B cell (primary cell): ENCODE measurements at regions of chr18 and their contacts with region 1.

Region 1: GRCh38 chr18:2547477-2548087 is 23.7 kb downstream of the METTL4 start:
- DNase-seq: peak; percentile 61
- ATAC-seq: peak; percentile 33
- H3K4me3 ChIP-seq: no peak overlapping the region
- H3K4me3 Mint-ChIP-seq: no peak overlapping the region
- H3K27ac ChIP-seq: no peak overlapping the region
- H3K27ac Mint-ChIP-seq: peak overlapping the region; percentile 18
- H3K4me1 ChIP-seq: peaks cover 0 to 2% of the 10 kb centered on the region in 2 donors
- H3K4me1 Mint-ChIP-seq: peaks cover 10% of the 10 kb centered on the region
- H3K27me3 ChIP-seq: no peaks in the 10 kb centered on the region
- H3K27me3 Mint-ChIP-seq: no peaks in the 10 kb centered on the region
- CTCF ChIP-seq: peak; percentile 81

Region 2: GRCh38 chr18:623761-624620 is 1923.6 kb before region 1 on chr18:
- CTCF ChIA-PET with region 1: no interaction called
- POLR2A ChIA-PET with region 1: no interaction called
- intact Hi-C with region 1: loop called (anchors 10 kb)
- DNase-seq: peak; percentile 52
- ATAC-seq: peak; percentile 49
- H3K4me3 ChIP-seq: no peak overlapping the region
- H3K4me3 Mint-ChIP-seq: no peak overlapping the region
- H3K27ac ChIP-seq: no peak overlapping the region
- H3K27ac Mint-ChIP-seq: no peak overlapping the region
- H3K4me1 ChIP-seq: no peaks in the 10 kb centered on the region
- H3K4me1 Mint-ChIP-seq: no peaks in the 10 kb centered on the region
- H3K27me3 ChIP-seq: peaks cover 0 to 2% (median 0%) of the 10 kb centered on the region in 4 experiments
- H3K27me3 Mint-ChIP-seq: peaks cover 24% of the 10 kb centered on the region
- CTCF ChIP-seq: peak; percentile 70

Region 3: DNA sequence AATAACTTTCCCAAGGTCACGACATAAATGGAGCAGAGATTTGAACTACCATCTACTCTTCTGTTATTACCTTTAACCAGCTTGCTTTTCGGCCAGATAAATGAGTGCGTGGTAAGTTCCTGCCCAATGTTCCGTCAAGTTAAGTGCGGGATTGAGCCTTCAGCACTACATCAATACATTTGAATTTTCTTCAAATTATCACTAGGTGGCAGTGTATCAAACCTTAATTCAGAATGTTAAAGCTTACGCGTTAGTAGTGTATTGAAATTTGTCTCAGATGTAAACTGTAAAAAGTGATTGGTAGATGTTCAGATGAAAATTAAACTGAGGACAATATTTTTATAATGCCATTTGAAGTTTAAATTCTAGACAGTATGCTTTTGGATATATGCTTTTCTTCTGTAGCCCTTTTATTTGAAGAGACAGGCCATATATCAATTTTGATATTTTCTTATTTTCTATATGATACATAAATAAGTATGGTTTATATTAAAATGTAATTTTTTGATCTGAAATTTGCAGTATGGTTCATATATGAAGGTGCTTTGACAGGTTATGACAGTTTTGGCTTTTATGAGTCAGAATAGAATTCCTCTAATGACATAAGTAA is 961.6 kb before region 1 on chr18:
- CTCF ChIA-PET with region 1: interaction called, 29 read pairs
- POLR2A ChIA-PET with region 1: no interaction called
- intact Hi-C with region 1: loop called (anchors 1 kb)
- DNase-seq: peak; percentile 36
- ATAC-seq: peak; percentile 41
- H3K4me3 ChIP-seq: no peak overlapping the region
- H3K4me3 Mint-ChIP-seq: no peak overlapping the region
- H3K27ac ChIP-seq: no peak overlapping the region
- H3K27ac Mint-ChIP-seq: no peak overlapping the region
- H3K4me1 ChIP-seq: no peaks in the 10 kb centered on the region
- H3K4me1 Mint-ChIP-seq: no peaks in the 10 kb centered on the region
- H3K27me3 ChIP-seq: no peaks in the 10 kb centered on the region
- H3K27me3 Mint-ChIP-seq: no peaks in the 10 kb centered on the region
- CTCF ChIP-seq: peak; percentile 77

Region 4: GRCh38 chr18:2331491-2331890 is 216.1 kb before region 1 on chr18:
- CTCF ChIA-PET with region 1: interaction called, 89 read pairs
- POLR2A ChIA-PET with region 1: no interaction called
- intact Hi-C with region 1: no loop called
- DNase-seq: no peak
- ATAC-seq: no peak
- H3K4me3 ChIP-seq: no peak overlapping the region
- H3K4me3 Mint-ChIP-seq: no peak overlapping the region
- H3K27ac ChIP-seq: no peak overlapping the region
- H3K27ac Mint-ChIP-seq: no peak overlapping the region
- H3K4me1 ChIP-seq: no peaks in the 10 kb centered on the region
- H3K4me1 Mint-ChIP-seq: no peaks in the 10 kb centered on the region
- H3K27me3 ChIP-seq: peaks cover 0 to 3% (median 0%) of the 10 kb centered on the region in 4 experiments
- H3K27me3 Mint-ChIP-seq: peaks cover 38% of the 10 kb centered on the region
- CTCF ChIP-seq: no peak

Region 5: DNA sequence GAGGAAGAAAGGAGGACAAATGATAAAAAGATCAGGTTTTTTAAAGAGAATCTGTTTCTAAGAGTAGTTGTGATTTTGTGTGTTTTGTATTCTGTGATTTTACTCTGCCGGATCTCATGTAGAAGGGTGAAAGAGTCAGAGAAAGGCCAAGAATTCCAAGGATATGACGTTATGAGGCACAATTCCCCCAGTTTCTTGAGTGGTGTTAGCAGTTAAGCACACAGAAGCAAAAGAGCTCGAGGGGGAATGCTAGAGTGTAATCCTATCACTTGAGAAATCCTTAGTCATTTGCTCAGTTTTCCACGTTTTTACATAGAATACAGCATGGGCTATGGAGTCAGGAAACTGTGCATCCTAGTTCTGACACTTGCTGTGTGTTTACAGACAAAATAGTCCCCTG is 11.1 kb before region 1 on chr18:
- CTCF ChIA-PET with region 1: interaction called, 15 read pairs
- POLR2A ChIA-PET with region 1: no interaction called
- intact Hi-C with region 1: no loop called
- DNase-seq: no peak
- ATAC-seq: no peak
- H3K4me3 ChIP-seq: no peak overlapping the region
- H3K4me3 Mint-ChIP-seq: peak overlapping the region; percentile 11
- H3K27ac ChIP-seq: no peak overlapping the region
- H3K27ac Mint-ChIP-seq: peak overlapping the region; percentile 22
- H3K4me1 ChIP-seq: peaks cover 25 to 28% of the 10 kb centered on the region in 2 donors
- H3K4me1 Mint-ChIP-seq: peaks cover 35% of the 10 kb centered on the region
- H3K27me3 ChIP-seq: no peaks in the 10 kb centered on the region
- H3K27me3 Mint-ChIP-seq: no peaks in the 10 kb centered on the region
- CTCF ChIP-seq: no peak

Region 6: GRCh38 chr18:3008541-3008940 is 461.0 kb after region 1 on chr18:
- CTCF ChIA-PET with region 1: no interaction called
- POLR2A ChIA-PET with region 1: no interaction called
- intact Hi-C with region 1: no loop called
- DNase-seq: no peak
- ATAC-seq: no peak
- H3K4me3 ChIP-seq: no peak overlapping the region
- H3K4me3 Mint-ChIP-seq: no peak overlapping the region
- H3K27ac ChIP-seq: no peak overlapping the region
- H3K27ac Mint-ChIP-seq: no peak overlapping the region
- H3K4me1 ChIP-seq: peaks cover 9 to 11% of the 10 kb centered on the region in 2 donors
- H3K4me1 Mint-ChIP-seq: peaks cover 24% of the 10 kb centered on the region
- H3K27me3 ChIP-seq: no peaks in the 10 kb centered on the region
- H3K27me3 Mint-ChIP-seq: no peaks in the 10 kb centered on the region
- CTCF ChIP-seq: no peak